ENCODE measurements at regions of chr2 and their contacts with region 1.

Region 1: DNA sequence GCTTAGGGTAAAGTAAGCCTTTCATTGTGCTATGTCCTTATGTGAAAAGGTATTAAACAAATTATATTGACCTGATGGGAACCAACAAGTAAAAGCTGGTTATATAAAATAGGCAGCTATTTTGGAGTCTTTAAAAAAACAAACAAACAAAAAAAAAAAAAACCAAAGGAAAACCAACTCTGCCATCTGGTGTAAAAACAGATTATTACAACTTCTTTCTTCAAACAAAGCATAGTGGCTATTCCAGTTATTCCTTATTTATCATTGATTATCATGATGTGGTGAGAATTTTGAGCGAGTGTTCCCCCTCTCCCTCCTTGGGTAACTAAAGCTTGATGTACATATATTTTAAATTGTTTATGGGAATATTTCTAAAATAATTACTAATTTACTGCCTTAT is 122.4 kb upstream of the FHL2 start:
- DNase-seq: peak; percentile 41
- H3K4me3 ChIP-seq: no peak overlapping the region
- H3K27ac ChIP-seq: no peak overlapping the region
- H3K4me1 ChIP-seq: peaks cover 13% of the 10 kb centered on the region
- H3K27me3 ChIP-seq: no peaks in the 10 kb centered on the region

Region 2: GRCh38 chr2:104914509-104914908 is 606.7 kb before region 1 on chr2:
- in situ Hi-C with region 1: no loop called
- DNase-seq: no peak
- H3K4me3 ChIP-seq: no peak overlapping the region
- H3K27ac ChIP-seq: no peak overlapping the region
- H3K4me1 ChIP-seq: no peaks in the 10 kb centered on the region
- H3K27me3 ChIP-seq: no peaks in the 10 kb centered on the region

Region 3: GRCh38 chr2:105358593-105358992 is 162.6 kb before region 1 on chr2:
- in situ Hi-C with region 1: loop called (anchors 10 kb)
- DNase-seq: no peak
- H3K4me3 ChIP-seq: no peak overlapping the region
- H3K27ac ChIP-seq: peak overlapping the region; percentile 26; the same call in 1 of the 2 replicates
- H3K4me1 ChIP-seq: peaks cover 10% of the 10 kb centered on the region; the same call in 1 of the 2 replicates
- H3K27me3 ChIP-seq: no peaks in the 10 kb centered on the region

Region 4: GRCh38 chr2:105369747-105370690 is 151.2 kb before region 1 on chr2:
- in situ Hi-C with region 1: loop called (anchors 5 kb)
- DNase-seq: peak; percentile 91
- H3K4me3 ChIP-seq: no peak overlapping the region
- H3K27ac ChIP-seq: peak overlapping the region; percentile 56
- H3K4me1 ChIP-seq: peaks cover 33% of the 10 kb centered on the region
- H3K27me3 ChIP-seq: no peaks in the 10 kb centered on the region

Region 5: DNA sequence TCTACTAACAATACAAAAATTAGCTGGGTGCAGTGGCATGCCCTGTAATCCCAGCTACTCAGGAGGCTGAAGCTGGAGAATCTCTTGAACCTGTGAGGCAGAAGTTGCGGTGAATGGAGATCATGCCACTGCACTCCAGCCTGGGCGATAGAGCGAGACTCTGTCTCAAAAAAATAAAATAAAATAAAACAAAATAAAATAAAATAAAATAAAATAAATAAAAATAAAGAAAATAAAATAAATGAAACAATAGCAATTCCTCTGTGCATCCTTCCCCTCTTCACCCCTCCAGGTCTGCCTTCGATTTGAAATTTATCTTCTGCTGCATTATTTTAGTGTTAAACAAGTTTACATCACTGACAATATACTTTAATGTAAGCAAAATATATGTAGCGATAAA is 735.9 kb after region 1 on chr2:
- in situ Hi-C with region 1: no loop called
- DNase-seq: no peak
- H3K4me3 ChIP-seq: no peak overlapping the region
- H3K27ac ChIP-seq: no peak overlapping the region
- H3K4me1 ChIP-seq: no peaks in the 10 kb centered on the region
- H3K27me3 ChIP-seq: no peaks in the 10 kb centered on the region